Psoas muscle (tissue), 8 donors: ENCODE measurements at regions of chr1 and their contacts with region 1.

Region 1: DNA sequence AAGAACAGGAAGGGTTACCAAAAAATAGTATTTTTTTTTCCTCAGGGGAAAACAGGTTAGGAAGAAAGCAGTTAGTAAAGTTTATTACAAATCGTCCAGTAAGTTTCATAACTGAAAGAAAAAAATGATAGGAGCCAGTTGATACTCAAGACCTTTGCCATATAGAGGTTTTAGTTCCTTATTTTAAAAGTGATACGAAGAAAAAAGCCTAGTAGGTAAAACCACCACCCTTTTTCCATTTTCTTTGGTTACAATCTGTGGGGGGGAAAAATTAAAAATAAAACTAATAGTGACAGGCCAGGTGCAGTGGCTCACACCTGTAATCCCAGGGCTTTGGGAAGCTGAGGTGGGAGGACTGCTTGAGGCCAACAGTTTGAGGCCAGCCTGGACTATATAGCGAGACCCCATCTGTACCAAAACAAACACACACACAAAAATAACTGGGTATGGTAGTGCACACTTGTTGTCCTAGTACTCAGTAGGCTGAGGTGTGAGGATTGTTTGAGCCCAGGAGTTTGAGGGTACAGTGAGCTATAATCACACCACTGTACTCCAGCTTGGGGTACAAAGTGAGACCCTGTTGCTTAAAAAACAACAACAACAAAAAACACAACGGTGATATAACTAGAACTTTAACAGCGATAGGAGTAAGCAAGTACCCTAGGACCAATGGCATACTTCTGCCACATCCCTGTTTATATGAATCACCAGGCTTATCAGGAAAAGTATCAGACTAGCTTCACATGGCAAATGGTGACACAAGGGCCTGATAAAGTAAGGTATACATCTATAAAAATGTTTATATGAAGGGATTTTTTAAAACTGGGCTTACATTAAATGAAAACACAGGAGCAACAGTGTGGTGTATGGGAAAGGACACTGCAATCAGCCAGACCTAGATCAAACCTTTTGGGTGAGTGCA is 5.4 kb downstream of the TMEM59 start:
- DNase-seq: no peak
- ATAC-seq: no peak
- H3K4me3 ChIP-seq: no peak overlapping the region
- H3K27ac ChIP-seq: no peak overlapping the region
- H3K4me1 ChIP-seq: peaks cover 53% of the 10 kb centered on the region
- H3K27me3 ChIP-seq: no peaks in the 10 kb centered on the region
- CTCF ChIP-seq: no peak

Region 2: DNA sequence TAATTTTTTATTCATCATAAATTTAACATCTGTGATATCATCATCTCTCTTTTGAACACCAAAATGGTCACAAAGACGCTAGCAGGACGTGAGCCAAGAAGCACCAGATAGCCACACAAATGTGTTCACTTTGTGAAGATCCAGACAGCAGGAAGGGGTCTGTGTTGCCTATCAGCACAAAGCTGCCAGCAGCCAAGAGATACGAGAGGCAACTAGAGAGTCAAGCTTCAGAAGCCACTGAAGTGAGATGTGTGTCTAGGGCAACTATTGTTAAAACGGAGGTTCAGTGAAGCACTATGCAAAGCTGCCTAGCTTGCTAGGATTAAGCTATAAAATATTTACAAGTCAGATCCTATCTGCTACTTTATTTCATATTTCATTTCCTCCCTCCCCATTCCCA is 254.8 kb before region 1 on chr1:
- intact Hi-C with region 1: no loop called
- DNase-seq: no peak
- ATAC-seq: no peak
- H3K4me3 ChIP-seq: no peak overlapping the region
- H3K27ac ChIP-seq: no peak overlapping the region
- H3K4me1 ChIP-seq: no peaks in the 10 kb centered on the region
- H3K27me3 ChIP-seq: no peaks in the 10 kb centered on the region
- CTCF ChIP-seq: no peak

Region 3: GRCh38 chr1:53959664-53960250 is 87.9 kb before region 1 on chr1:
- intact Hi-C with region 1: loop called in 1 of 2 experiments (anchors 10 kb)
- DNase-seq: no peak
- ATAC-seq: peak in 1 of 4 donors; percentile 58
- H3K4me3 ChIP-seq: no peak overlapping the region
- H3K27ac ChIP-seq: no peak overlapping the region
- H3K4me1 ChIP-seq: no peaks in the 10 kb centered on the region
- H3K27me3 ChIP-seq: no peaks in the 10 kb centered on the region
- CTCF ChIP-seq: peak; percentile 46